ENCODE measurements at regions of chr1 and their contacts with region 1.

Region 1: GRCh38 chr1:77219166-77219887 is at the start of gene PIGK:
- DNase-seq: peak; percentile 75 to 79 (median 78)
- H3K4me3 ChIP-seq: peak within 1 kb of the TSS; percentile 75 to 90 (median 77)
- H3K4me3 Mint-ChIP-seq: peak within 1 kb of the TSS; percentile 91 to 98
- H3K27ac ChIP-seq: peak within 1 kb of the TSS; percentile 60 to 77
- H3K27ac Mint-ChIP-seq: peak within 1 kb of the TSS; percentile 80 to 91 (median 89)
- H3K4me1 ChIP-seq: peaks cover 6 to 14% of the 10 kb centered on the region in 2 donors
- H3K4me1 Mint-ChIP-seq: peaks cover 16% of the 10 kb centered on the region
- H3K27me3 ChIP-seq: no peaks in the 10 kb centered on the region
- H3K27me3 Mint-ChIP-seq: no peaks in the 10 kb centered on the region
- CTCF ChIP-seq: no peak
- polyA plus RNA-seq, gene PIGK: 4.0 to 24.7 (median 19.4) TPM

Region 2: GRCh38 chr1:76074321-76075187 is 1144.8 kb before region 1 on chr1 and contains the start of gene ST6GALNAC3:
- intact Hi-C with region 1: loop called in 1 of 2 experiments (anchors 10 kb)
- DNase-seq: peak; percentile 56 to 76 (median 67)
- H3K4me3 ChIP-seq: peak within 1 kb of the TSS; percentile 59 to 92 (median 79)
- H3K4me3 Mint-ChIP-seq: peak within 1 kb of the TSS; percentile 83 to 93
- H3K27ac ChIP-seq: peak within 1 kb of the TSS; percentile 49 to 69
- H3K27ac Mint-ChIP-seq: peak within 1 kb of the TSS; percentile 85 to 94 (median 88)
- H3K4me1 ChIP-seq: peaks cover 27 to 35% of the 10 kb centered on the region in 2 donors
- H3K4me1 Mint-ChIP-seq: peaks cover 32% of the 10 kb centered on the region
- H3K27me3 ChIP-seq: peaks cover 0 to 3% of the 10 kb centered on the region in 2 donors
- H3K27me3 Mint-ChIP-seq: peaks cover 5 to 8% (median 7%) of the 10 kb centered on the region in 3 donors
- CTCF ChIP-seq: no peak
- polyA plus RNA-seq, gene ST6GALNAC3: 6.5 to 9.2 (median 7.6) TPM

Region 3: GRCh38 chr1:77175230-77175844 is 44.0 kb before region 1 on chr1:
- intact Hi-C with region 1: no loop called
- DNase-seq: no peak
- H3K4me3 ChIP-seq: no peak overlapping the region
- H3K4me3 Mint-ChIP-seq: no peak overlapping the region
- H3K27ac ChIP-seq: no peak overlapping the region
- H3K27ac Mint-ChIP-seq: no peak overlapping the region
- H3K4me1 ChIP-seq: no peaks in the 10 kb centered on the region
- H3K4me1 Mint-ChIP-seq: no peaks in the 10 kb centered on the region
- H3K27me3 ChIP-seq: no peaks in the 10 kb centered on the region
- H3K27me3 Mint-ChIP-seq: no peaks in the 10 kb centered on the region
- CTCF ChIP-seq: no peak

Region 4: GRCh38 chr1:77281491-77282186 is 62.3 kb after region 1 on chr1 and contains the start of gene AK5:
- intact Hi-C with region 1: no loop called
- DNase-seq: peak in 2 of 3 donors; percentile 10 to 18
- H3K4me3 ChIP-seq: peak within 1 kb of the TSS; percentile 33 to 74 (median 37)
- H3K4me3 Mint-ChIP-seq: peak within 1 kb of the TSS; percentile 72 to 89
- H3K27ac ChIP-seq: no peak within 1 kb of the TSS
- H3K27ac Mint-ChIP-seq: no peak within 1 kb of the TSS
- H3K4me1 ChIP-seq: peaks cover 32 to 34% of the 10 kb centered on the region in 2 donors
- H3K4me1 Mint-ChIP-seq: peaks cover 38% of the 10 kb centered on the region
- H3K27me3 ChIP-seq: peaks cover 81 to 93% of the 10 kb centered on the region in 2 donors
- H3K27me3 Mint-ChIP-seq: peaks cover 73 to 88% (median 76%) of the 10 kb centered on the region in 3 donors
- CTCF ChIP-seq: no peak
- polyA plus RNA-seq, gene AK5: 0.34 to 0.72 (median 0.48) TPM

Region 5: DNA sequence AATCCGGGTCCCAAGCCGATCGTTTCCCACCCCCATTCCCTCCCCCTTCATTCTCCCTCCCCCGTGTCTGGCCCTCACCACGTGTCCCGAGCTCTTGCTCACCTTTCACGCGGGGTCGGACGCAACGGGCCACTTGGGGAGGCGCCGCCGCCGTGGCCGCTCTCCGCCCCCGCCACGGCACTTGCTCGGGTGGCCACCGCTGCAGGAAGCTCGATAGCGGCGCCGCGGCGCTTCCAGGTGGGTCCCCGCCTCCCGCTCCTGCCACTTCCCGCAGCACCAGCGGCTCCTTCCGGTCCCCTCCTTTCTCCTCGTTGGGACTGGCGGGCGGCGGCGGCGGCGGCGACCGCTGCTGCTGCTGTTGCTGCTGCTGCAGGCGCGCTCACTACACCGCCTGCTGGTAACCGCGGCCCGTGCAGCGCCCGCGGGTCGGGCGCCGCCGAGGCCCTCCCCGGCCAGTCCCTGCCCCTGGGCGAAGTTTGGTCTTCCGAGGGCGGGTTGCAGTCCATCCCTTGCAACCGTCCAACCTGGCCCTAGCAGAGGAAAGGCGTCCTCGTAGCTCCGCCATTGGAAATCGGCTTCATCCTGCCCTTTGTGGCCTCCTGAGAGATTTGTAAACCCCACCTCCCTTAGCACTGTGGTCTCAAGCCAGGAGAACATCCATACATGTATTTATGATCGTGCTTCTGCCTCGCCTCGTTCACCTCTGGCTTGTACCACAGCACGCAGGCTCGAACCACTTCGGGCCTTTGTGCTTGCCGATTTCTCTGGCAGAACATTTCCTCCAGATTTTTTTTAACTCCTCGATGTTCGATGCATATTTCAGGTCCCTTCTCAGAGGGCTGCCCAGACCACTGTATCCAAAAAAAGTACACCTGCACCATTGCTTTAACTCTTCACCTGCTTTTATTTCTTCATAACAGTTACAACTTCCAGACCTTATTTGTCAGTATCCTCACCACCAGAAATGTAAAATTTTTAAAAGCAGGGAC is 464.1 kb after region 1 on chr1:
- intact Hi-C with region 1: loop called in 1 of 2 experiments (anchors 5 kb)
- DNase-seq: peak; percentile 80 to 89 (median 87)
- H3K4me3 ChIP-seq: peak overlapping the region; percentile 88 to 96 (median 94)
- H3K4me3 Mint-ChIP-seq: peak overlapping the region; percentile 97 to 99
- H3K27ac ChIP-seq: peak overlapping the region; percentile 95 to 98
- H3K27ac Mint-ChIP-seq: peak overlapping the region; percentile 96 to 99 (median 97)
- H3K4me1 ChIP-seq: peaks cover 19 to 23% of the 10 kb centered on the region in 2 donors
- H3K4me1 Mint-ChIP-seq: peaks cover 41% of the 10 kb centered on the region
- H3K27me3 ChIP-seq: no peaks in the 10 kb centered on the region
- H3K27me3 Mint-ChIP-seq: no peaks in the 10 kb centered on the region
- CTCF ChIP-seq: peak; percentile 88